Common myeloid progenitor, CD34-positive (primary cell): ENCODE measurements at regions of chr7 and their contacts with region 1.

Region 1: GRCh38 chr7:90595801-90596671 is at the start of gene CDK14:
- DNase-seq: peak; percentile 89 to 97 (median 96)
- H3K4me3 ChIP-seq: peak within 1 kb of the TSS; percentile 75 to 93 (median 80)
- H3K27ac ChIP-seq: peak within 1 kb of the TSS; percentile 47 to 68
- H3K4me1 ChIP-seq: peaks cover 24 to 38% (median 31%) of the 10 kb centered on the region in 4 experiments
- H3K27me3 ChIP-seq: peaks cover 0 to 3% (median 0%) of the 10 kb centered on the region in 5 experiments

Region 2: DNA sequence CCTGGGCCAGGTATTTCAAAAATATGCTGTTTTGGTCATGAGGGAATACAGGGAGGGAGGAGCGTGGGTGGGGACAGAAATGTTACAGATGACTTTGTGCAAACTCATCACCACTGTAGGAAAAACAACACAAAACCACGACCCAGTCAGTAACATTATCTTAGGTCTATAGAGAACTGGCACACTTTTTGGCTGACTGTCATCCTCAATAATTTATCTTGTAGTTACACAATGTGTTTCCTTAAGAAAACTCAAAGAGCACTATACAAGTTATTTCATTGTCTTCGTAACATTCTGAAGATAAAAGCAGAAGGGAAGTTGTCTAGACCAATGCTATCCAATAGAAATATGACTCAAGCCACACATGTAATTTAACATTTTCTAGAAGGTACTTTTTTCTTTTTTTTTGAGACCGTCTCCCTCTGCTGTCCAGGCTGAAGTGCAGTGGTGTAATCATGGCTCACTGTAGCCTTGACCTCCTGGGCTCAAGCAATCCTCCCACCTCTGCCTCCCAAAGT is 16.8 kb before region 1 on chr7:
- CTCF ChIA-PET with region 1: interaction called, 12 read pairs
- POLR2A ChIA-PET with region 1: interaction called, 4 read pairs
- DNase-seq: peak; percentile 81 to 98 (median 94)
- H3K4me3 ChIP-seq: peak overlapping the region in 1 of 7 experiments; percentile 24
- H3K27ac ChIP-seq: peak overlapping the region in 1 of 2 experiments; percentile 34
- H3K4me1 ChIP-seq: peaks cover 4 to 15% (median 7%) of the 10 kb centered on the region in 4 experiments
- H3K27me3 ChIP-seq: no peaks in the 10 kb centered on the region

Region 3: GRCh38 chr7:90607196-90607595 is 11.2 kb after region 1 on chr7:
- CTCF ChIA-PET with region 1: interaction called, 11 read pairs
- POLR2A ChIA-PET with region 1: no interaction called
- DNase-seq: no peak
- H3K4me3 ChIP-seq: no peak overlapping the region
- H3K27ac ChIP-seq: no peak overlapping the region
- H3K4me1 ChIP-seq: no peaks in the 10 kb centered on the region
- H3K27me3 ChIP-seq: no peaks in the 10 kb centered on the region